ENCODE measurements at regions of chr17 and their contacts with region 1.

Region 1: GRCh38 chr17:5438716-5439445 is at the start of gene C1QBP:
- DNase-seq: peak; percentile 94
- ATAC-seq: peak; percentile 94
- H3K4me3 Mint-ChIP-seq: peak within 1 kb of the TSS; percentile 88
- H3K27ac Mint-ChIP-seq: peak within 1 kb of the TSS; percentile 93
- H3K4me1 Mint-ChIP-seq: peaks cover 43% of the 10 kb centered on the region
- H3K27me3 Mint-ChIP-seq: no peaks in the 10 kb centered on the region
- total RNA-seq, gene C1QBP: 166 to 240 TPM

Region 2: GRCh38 chr17:5249615-5250014 is 189.3 kb before region 1 on chr17:
- CTCF ChIA-PET with region 1: interaction called, 11 read pairs
- DNase-seq: peak; percentile 78
- ATAC-seq: peak; percentile 87
- H3K4me3 Mint-ChIP-seq: no peak overlapping the region
- H3K27ac Mint-ChIP-seq: no peak overlapping the region
- H3K4me1 Mint-ChIP-seq: peaks cover 6% of the 10 kb centered on the region
- H3K27me3 Mint-ChIP-seq: no peaks in the 10 kb centered on the region

Region 3: DNA sequence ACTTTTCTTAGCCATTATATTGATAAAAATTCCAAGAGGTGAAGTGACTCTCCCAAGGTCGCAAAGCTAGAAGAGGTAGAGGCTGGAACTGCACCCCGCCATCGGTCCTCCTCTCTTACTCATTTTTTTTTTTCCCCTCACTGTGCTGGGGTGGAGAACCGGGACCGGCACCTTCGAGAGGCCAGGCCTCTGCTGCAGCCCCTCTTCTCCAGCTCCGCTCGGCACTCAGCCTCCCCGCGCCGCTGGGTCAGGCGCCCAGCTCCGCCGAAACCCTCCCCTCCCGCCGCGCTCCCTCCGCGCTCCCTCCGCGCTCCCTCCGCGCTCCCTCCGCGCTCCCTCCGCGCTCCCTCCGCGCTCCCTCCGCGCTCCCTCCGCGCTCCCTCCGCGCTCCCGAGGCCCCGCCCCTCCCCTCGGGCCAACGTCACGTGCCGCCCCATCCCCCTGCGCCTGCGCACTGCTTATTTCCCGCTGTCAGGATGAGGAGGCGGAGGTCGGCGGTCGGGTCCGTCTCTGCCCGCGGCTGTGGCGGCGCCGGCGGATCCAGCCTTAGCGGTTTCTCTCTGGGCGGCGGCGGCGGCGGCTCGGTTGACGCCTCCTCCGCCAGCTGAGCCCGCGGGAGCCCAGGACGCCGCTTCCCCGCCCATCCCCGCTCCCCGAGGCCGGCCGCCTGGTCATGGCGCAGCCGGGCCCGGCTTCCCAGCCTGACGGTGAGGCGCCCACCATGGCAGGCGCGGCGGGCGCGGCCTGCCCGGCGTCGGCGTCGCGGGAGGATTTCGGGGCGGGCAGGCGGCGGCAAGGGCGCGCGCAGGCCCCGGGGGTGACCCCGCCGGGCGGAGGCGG is 156.8 kb before region 1 on chr17 and contains the start of gene RABEP1:
- CTCF ChIA-PET with region 1: interaction called, 13 read pairs
- DNase-seq: peak; percentile 94
- ATAC-seq: peak; percentile 87
- H3K4me3 Mint-ChIP-seq: peak within 1 kb of the TSS; percentile 83
- H3K27ac Mint-ChIP-seq: peak within 1 kb of the TSS; percentile 85
- H3K4me1 Mint-ChIP-seq: peaks cover 30% of the 10 kb centered on the region
- H3K27me3 Mint-ChIP-seq: no peaks in the 10 kb centered on the region
- total RNA-seq, gene RABEP1: 35.1 to 38.0 TPM

Region 4: GRCh38 chr17:5419356-5419958 is 19.4 kb before region 1 on chr17 and contains the start of gene NUP88:
- CTCF ChIA-PET with region 1: interaction called, 74 read pairs
- DNase-seq: peak; percentile 99
- ATAC-seq: peak; percentile 97
- H3K4me3 Mint-ChIP-seq: peak within 1 kb of the TSS; percentile 98
- H3K27ac Mint-ChIP-seq: peak within 1 kb of the TSS; percentile 99
- H3K4me1 Mint-ChIP-seq: peaks cover 50% of the 10 kb centered on the region
- H3K27me3 Mint-ChIP-seq: no peaks in the 10 kb centered on the region
- total RNA-seq, gene NUP88: 117 to 123 TPM

Region 5: GRCh38 chr17:5468075-5468473 is 29.2 kb after region 1 on chr17:
- CTCF ChIA-PET with region 1: interaction called, 23 read pairs
- DNase-seq: peak; percentile 43
- ATAC-seq: peak; percentile 18
- H3K4me3 Mint-ChIP-seq: peak overlapping the region; percentile 87
- H3K27ac Mint-ChIP-seq: peak overlapping the region; percentile 68
- H3K4me1 Mint-ChIP-seq: peaks cover 42% of the 10 kb centered on the region
- H3K27me3 Mint-ChIP-seq: no peaks in the 10 kb centered on the region

Region 6: DNA sequence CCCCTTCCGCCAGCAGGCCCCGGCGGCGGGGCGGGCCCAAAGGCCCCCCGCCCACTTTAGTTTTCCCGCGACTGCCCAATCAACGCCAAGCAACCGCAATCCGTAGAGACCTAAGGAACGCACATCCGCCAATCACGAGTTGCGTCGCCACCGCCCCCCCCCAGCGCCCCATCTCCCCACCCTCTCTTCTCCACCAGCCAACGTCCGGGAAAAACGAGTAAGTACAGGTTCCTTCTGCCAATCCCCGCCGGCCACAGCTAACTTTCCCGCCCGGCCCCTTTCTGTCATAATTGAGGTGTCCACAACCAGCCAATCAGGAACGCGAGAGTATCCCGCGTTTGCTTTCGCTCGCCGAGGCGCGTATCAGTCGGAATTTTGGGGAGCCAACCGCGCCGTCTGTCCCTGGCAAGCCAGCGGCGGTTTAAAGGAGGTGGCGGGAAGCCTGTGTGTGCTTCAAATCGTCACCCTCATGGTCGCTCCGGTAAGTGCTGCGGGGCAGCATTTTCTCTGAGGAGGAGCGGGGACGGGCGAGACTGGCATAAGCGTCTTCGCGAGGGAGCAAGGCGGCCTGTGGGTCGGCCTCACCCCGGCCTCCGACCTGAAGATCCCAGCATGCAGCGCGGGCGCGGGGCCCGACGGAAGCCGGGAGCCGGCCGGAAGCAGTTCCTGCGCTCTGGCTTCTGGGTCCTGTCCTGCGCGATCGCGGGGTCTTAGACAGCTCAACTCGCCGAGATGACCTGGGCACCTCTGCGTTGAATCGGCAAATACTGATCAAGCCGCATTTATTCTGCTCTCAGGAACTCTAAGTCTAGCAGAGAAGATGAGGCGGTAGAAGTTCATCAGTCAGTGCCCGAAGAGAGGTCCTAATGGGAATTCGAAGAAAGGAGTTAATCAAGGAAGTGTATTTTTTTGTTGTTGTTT is 47.6 kb after region 1 on chr17 and contains the start of gene MIS12:
- CTCF ChIA-PET with region 1: interaction called, 13 read pairs
- DNase-seq: peak; percentile 99
- ATAC-seq: peak; percentile 92
- H3K4me3 Mint-ChIP-seq: peak within 1 kb of the TSS; percentile 99
- H3K27ac Mint-ChIP-seq: peak within 1 kb of the TSS; percentile 99
- H3K4me1 Mint-ChIP-seq: peaks cover 53% of the 10 kb centered on the region
- H3K27me3 Mint-ChIP-seq: no peaks in the 10 kb centered on the region
- total RNA-seq, gene MIS12: 30.8 to 36.4 TPM

Measured in activated CD8-positive, alpha-beta memory T cell treated with anti-CD3 and anti-CD28 coated beads, Interleukin-2, amount 10 ng/mL, durations not matched to agents 7 days and 5 days (primary cell).